Activated CD4-positive, alpha-beta memory T cell treated with anti-CD3 and anti-CD28 coated beads, Interleukin-2, amount 10 ng/mL, durations not matched to agents 7 days and 5 days (primary cell): ENCODE measurements at regions of chr10 and their contacts with region 1.

Region 1: DNA sequence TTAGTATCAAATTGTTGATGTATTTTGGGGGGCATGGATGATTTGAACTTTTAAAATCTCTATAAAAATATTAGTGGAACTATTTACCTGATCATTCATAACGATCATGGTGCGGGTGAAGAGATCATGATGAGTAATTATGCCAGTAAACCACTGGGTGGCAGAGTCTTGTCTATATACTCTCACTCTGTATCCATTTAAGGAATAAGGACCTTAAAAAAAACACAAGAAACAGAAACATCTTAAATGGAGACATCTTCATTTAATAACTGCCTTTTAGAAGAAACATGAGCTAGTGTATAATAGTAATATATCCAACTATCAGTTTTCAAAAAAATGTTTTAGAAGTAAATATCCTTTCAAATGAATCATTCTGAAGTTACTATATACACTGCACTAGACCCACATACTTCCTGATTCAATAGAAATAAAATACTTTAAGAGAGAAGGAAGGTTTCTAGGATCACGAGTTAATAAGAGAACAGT is 84.0 kb downstream of the NRBF2 start:
- DNase-seq: no peak
- H3K4me3 Mint-ChIP-seq: no peak overlapping the region
- H3K27ac Mint-ChIP-seq: no peak overlapping the region
- H3K4me1 Mint-ChIP-seq: peaks cover 51% of the 10 kb centered on the region
- H3K27me3 Mint-ChIP-seq: no peaks in the 10 kb centered on the region

Region 2: DNA sequence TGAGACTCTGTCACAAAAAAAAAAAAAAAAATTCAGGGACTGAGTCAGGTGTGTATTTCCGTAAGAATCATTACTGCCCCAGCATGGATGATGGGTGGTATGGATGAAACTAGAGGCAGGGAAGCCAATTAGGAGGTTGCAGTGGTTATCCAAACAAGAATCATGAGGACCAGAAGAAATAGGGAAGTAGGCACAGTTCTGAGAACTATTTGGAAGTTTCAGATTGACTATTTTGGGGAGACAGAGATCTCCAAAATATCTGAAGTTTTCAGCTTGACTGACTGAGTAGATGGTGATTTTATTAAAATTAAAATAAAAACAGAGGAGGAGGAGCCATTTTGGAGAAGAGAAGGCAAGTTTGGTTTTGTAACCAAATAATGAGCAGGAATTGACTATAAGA is 203.4 kb before region 1 on chr10:
- CTCF ChIA-PET with region 1: no interaction called
- POLR2A ChIA-PET with region 1: no interaction called
- DNase-seq: no peak
- H3K4me3 Mint-ChIP-seq: no peak overlapping the region
- H3K27ac Mint-ChIP-seq: no peak overlapping the region
- H3K4me1 Mint-ChIP-seq: no peaks in the 10 kb centered on the region
- H3K27me3 Mint-ChIP-seq: peaks cover 23% of the 10 kb centered on the region

Region 3: GRCh38 chr10:63137306-63137705 is 79.9 kb before region 1 on chr10:
- CTCF ChIA-PET with region 1: no interaction called
- POLR2A ChIA-PET with region 1: no interaction called
- DNase-seq: no peak
- H3K4me3 Mint-ChIP-seq: no peak overlapping the region
- H3K27ac Mint-ChIP-seq: no peak overlapping the region
- H3K4me1 Mint-ChIP-seq: peaks cover 50% of the 10 kb centered on the region
- H3K27me3 Mint-ChIP-seq: no peaks in the 10 kb centered on the region

Region 4: GRCh38 chr10:63227207-63227915 is 10.2 kb after region 1 on chr10:
- CTCF ChIA-PET with region 1: interaction called, 15 read pairs
- POLR2A ChIA-PET with region 1: interaction called, 3 read pairs
- DNase-seq: no peak
- H3K4me3 Mint-ChIP-seq: no peak overlapping the region
- H3K27ac Mint-ChIP-seq: peak overlapping the region; percentile 87
- H3K4me1 Mint-ChIP-seq: peaks cover 48% of the 10 kb centered on the region
- H3K27me3 Mint-ChIP-seq: no peaks in the 10 kb centered on the region

Region 5: GRCh38 chr10:63720072-63720537 is 502.9 kb after region 1 on chr10:
- CTCF ChIA-PET with region 1: interaction called, 22 read pairs
- POLR2A ChIA-PET with region 1: no interaction called
- DNase-seq: peak; percentile 47
- H3K4me3 Mint-ChIP-seq: no peak overlapping the region
- H3K27ac Mint-ChIP-seq: no peak overlapping the region
- H3K4me1 Mint-ChIP-seq: peaks cover 28% of the 10 kb centered on the region
- H3K27me3 Mint-ChIP-seq: peaks cover 8% of the 10 kb centered on the region